ENCODE measurements at regions of chr7 and their contacts with region 1.

Region 1: DNA sequence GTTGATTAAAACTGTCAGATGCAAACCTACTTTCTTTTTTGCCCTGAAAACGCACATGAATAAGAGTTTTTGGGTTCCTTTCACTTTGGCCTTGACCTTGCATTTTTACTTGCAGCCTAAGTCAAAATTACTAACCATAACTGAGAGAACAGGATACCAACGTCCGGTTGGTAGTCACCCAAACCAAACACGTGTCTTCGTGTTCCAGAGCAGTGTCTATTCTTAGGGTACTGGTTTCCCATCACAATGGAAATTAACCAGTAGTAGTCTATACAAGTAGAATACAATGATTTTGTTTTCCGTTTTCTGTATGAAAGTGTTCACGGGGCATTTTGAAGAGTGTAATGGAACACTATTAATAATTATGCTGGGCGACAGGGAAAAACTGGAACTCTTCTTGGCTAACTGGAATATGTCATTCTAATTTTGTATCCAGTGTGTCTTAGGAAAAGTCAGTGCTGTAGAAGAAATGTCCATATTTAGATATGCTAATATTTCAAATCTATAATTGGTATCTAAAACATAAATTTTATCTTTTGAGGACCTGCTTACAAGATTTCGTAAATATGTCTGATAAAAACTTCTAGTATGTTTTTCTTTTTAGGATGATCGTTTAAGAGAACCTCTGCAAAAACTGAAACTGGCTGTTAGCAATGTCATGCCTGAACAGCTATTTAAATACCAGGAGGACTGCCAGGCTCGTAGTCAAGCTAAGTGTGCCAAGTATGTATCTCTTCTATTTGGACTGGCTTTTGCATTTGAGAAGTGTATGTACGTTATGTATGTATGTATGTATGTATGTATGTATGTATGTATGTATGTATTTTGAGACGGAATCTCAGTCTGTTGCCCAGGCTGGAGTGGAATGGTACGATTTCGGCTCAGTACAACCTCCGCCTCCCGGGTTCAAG is 40.9 kb downstream of the UBN2 start:
- DNase-seq: no peak
- CTCF ChIP-seq: no peak

Region 2: DNA sequence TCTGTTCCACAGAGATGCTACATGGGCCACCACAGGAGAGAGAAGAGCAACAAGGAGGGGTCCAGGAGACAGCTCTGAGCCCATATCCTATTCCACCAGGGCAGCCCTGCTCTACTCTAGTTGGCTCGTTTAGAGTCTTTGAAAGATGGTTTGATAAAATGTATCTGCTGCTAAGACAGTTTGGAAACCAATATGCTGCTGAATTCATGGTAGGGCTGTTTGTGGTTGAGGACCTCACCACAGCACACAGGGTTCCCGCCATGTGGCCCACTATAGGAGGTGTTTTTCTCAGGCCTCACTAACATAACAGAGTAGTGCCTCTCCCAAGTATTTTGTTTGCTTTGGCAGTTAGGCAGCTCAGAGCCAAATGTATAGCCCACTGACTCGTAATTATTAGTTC is 200.3 kb before region 1 on chr7:
- CTCF ChIA-PET with region 1: no interaction called
- POLR2A ChIA-PET with region 1: no interaction called
- DNase-seq: no peak
- CTCF ChIP-seq: no peak

Region 3: DNA sequence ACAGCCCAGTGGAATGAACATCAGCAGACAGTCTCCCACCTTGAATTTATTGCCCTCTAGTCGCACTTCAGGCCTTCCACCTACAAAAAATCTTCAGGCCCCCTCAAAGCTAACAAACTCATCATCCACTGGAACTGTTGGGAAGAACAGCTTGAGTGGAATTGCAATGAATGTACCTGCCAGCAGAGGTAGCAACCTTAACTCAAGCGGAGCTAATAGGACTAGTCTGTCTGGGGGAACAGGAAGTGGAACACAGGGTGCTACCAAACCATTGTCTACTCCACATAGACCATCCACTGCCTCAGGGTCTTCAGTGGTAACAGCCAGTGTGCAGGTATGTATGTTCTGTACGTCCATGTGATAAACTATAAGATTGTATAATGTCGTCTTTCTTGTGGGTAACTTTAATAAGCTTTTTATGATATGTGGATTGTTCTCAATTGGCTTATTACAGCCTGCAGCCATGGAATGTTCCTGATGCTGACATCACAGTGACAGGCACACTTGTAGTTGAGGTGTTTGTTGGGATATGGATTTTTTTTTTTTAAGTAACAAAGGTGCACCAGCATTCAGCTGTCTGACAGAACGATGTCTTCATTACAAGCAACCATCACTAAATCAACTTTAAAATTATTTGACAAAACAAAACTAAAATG is 12.4 kb after region 1 on chr7:
- CTCF ChIA-PET with region 1: interaction called, 11 read pairs
- POLR2A ChIA-PET with region 1: no interaction called
- DNase-seq: no peak
- CTCF ChIP-seq: no peak

Measured in GM10248 (cell line).